Activated T-helper 1 cell treated with anti-CD3 and anti-CD28 coated beads, Interleukin-12 subunit alpha, Interleukin-12 subunit beta, Interleukin-2, Interleukin-4 antibody, amounts not matched to agents 30 ng/mL and 10 ng/mL and 1 ng/mL, durations not matched to agents 14 hours and 24 hours and 36 hours (primary cell): ENCODE measurements at regions of chr13 and their contacts with region 1.

Region 1: DNA sequence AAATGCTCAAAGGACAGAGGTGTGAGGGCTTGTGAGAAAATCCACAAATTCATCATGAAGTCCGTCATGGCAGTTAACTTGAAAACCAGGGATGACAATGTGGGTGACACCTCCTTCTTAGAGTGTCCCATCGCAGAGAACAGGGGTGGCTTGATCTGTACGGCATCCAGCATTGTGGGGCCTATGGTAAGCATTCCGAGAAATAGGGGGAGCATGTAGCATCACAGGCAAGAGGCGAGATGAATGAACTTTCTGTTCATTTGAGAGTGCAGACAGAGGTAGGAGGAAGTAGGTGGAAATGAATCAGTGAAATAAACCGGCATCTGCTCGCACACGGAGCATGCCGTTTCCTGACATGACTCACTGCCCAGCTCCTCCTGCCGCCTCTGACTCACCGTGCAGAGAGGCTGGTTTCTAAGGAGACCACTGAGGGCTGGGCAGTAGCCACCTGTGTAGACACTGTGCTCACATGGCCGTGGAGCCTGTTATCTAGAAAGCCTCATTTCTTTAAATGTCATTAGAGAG is 339.0 kb downstream of the RFC3 start:
- DNase-seq: peak; percentile 59
- H3K4me3 Mint-ChIP-seq: peak overlapping the region; percentile 68
- H3K27ac Mint-ChIP-seq: peak overlapping the region; percentile 91
- H3K4me1 Mint-ChIP-seq: peaks cover 37% of the 10 kb centered on the region
- H3K27me3 Mint-ChIP-seq: peaks cover 3% of the 10 kb centered on the region

Region 2: DNA sequence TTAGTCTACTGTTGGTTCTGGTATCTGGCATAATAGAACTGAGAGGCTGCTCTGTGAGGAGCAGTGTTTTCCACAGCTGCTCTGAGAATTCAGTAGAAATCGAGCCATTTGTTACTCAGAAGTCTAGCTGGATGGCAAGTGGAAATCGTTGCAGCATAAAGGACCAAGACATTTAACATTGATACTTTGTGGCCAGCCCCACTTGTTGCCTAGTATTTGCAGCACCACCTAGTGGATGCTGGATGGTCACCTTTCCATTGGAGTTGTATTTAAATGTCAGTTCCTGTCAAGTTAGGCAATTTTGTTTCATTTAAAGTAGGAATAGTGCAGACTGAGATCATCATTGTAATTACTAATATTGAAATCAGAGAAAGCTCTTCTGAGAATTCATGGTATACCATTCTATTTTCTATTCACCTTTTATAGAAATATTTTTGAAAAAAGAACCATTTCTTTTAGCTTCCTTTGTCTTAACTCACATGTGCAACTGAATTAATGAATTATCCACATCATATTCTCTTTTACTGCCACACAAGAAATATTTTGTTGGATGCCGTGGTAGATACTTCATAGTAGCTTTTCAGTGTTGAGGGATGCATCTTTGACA is 1506.1 kb before region 1 on chr13:
- intact Hi-C with region 1: loop called (anchors 5 kb)
- DNase-seq: peak; percentile 42
- H3K4me3 Mint-ChIP-seq: no peak overlapping the region
- H3K27ac Mint-ChIP-seq: no peak overlapping the region
- H3K4me1 Mint-ChIP-seq: peaks cover 52% of the 10 kb centered on the region
- H3K27me3 Mint-ChIP-seq: no peaks in the 10 kb centered on the region

Region 3: DNA sequence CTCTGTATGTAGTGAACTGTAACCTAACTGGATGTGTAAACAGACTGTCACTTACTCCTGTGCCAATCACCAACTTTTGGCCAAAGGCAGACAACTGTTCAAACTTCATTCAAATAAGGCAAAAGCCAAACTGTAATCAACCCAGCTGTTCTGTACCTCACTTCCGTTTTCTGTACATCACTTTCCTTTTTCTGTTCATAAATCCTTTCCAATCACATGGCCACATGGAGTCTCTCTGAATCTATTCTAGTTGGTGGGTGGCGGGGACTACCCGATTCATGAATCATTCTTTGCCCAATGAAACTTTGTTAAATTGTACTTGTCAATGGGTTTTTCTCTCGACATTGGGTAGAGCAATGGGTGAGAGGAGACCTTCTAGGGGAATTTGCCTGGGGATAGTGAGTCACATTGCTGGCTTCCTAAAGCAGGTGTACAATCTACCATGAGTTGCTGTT is 517.2 kb before region 1 on chr13:
- intact Hi-C with region 1: loop called (anchors 5 kb)
- DNase-seq: no peak
- H3K4me3 Mint-ChIP-seq: no peak overlapping the region
- H3K27ac Mint-ChIP-seq: peak overlapping the region; percentile 75
- H3K4me1 Mint-ChIP-seq: peaks cover 45% of the 10 kb centered on the region
- H3K27me3 Mint-ChIP-seq: peaks cover 2% of the 10 kb centered on the region

Region 4: DNA sequence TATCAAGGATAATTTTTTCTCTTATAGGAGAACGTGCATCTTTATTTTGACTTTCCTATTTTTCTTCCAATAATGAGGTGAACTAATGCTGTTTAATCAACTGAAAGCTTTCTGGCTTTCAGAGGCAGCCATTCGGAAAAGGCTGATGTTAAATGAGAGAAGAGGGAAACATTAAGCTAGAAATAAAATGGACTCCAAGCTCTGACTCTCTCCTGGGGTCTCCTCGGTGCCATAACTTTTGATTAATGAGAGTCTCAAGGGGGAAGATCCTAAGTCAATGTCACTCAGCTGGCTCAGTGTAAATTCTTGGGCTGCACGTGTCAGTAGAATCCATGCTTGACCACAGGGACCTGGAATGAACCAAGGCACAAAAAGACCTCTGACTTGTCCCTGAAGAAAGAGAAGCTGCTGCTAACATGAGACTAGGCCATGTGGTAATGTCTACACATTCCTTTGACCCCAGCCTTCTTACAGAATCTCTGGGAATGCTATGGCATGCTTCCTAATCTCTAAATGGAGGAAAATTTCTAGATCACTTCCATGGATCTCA is 491.2 kb before region 1 on chr13:
- intact Hi-C with region 1: no loop called
- DNase-seq: no peak
- H3K4me3 Mint-ChIP-seq: no peak overlapping the region
- H3K27ac Mint-ChIP-seq: no peak overlapping the region
- H3K4me1 Mint-ChIP-seq: peaks cover 13% of the 10 kb centered on the region
- H3K27me3 Mint-ChIP-seq: no peaks in the 10 kb centered on the region

Region 5: DNA sequence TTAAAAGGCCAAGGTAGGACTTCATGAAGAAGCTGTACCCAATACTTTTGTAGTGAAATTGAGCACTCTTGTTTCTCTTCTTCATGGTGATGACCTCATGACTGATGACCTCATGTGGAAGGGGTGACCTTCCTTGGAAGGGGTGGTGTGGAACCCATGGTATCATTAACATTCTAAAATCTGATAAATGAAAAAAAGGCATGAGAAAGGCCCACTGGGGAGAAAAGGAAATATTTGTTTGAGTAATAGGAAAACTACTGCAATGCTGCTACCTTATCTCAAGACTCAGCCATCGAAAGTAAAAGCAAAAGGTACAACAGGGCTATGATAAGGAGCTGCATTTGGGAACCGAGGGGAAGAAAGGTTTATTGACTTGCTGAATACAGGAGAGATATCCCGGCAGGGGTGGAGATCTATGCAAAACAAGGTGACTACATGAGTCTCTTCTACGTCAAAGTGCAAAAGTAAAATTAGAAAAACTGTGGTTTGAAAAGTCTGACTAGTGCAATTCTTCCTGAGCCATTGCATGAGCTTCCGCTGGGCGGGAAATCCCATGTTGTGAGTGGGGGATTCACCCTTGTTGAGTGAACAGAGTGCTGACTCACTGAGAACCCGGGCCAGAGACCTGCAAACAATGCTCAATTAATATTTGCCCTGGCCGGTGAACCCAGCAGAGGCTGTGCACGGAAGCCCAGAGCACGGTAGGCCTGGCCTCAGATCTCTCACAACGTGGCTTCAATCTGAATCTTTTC is 477.8 kb before region 1 on chr13:
- intact Hi-C with region 1: loop called (anchors 1 kb)
- DNase-seq: peak; percentile 71
- H3K4me3 Mint-ChIP-seq: peak overlapping the region; percentile 73
- H3K27ac Mint-ChIP-seq: peak overlapping the region; percentile 91
- H3K4me1 Mint-ChIP-seq: peaks cover 36% of the 10 kb centered on the region
- H3K27me3 Mint-ChIP-seq: peaks cover 2% of the 10 kb centered on the region

Region 6: GRCh38 chr13:33817901-33818706 is 338.8 kb before region 1 on chr13 and contains the start of gene RFC3:
- intact Hi-C with region 1: loop called (anchors 1 kb)
- DNase-seq: peak; percentile 90
- H3K4me3 Mint-ChIP-seq: peak within 1 kb of the TSS; percentile 97
- H3K27ac Mint-ChIP-seq: peak within 1 kb of the TSS; percentile 90
- H3K4me1 Mint-ChIP-seq: peaks cover 46% of the 10 kb centered on the region
- H3K27me3 Mint-ChIP-seq: peaks cover 8% of the 10 kb centered on the region
- total RNA-seq, gene RFC3: 74.7 and 78.0 TPM in 2 replicates

Region 7: GRCh38 chr13:34179481-34179880 is 22.6 kb after region 1 on chr13:
- intact Hi-C with region 1: no loop called
- DNase-seq: no peak
- H3K4me3 Mint-ChIP-seq: no peak overlapping the region
- H3K27ac Mint-ChIP-seq: no peak overlapping the region
- H3K4me1 Mint-ChIP-seq: no peaks in the 10 kb centered on the region
- H3K27me3 Mint-ChIP-seq: peaks cover 6% of the 10 kb centered on the region

Region 8: GRCh38 chr13:34257966-34258365 is 101.1 kb after region 1 on chr13:
- intact Hi-C with region 1: no loop called
- DNase-seq: no peak
- H3K4me3 Mint-ChIP-seq: no peak overlapping the region
- H3K27ac Mint-ChIP-seq: no peak overlapping the region
- H3K4me1 Mint-ChIP-seq: no peaks in the 10 kb centered on the region
- H3K27me3 Mint-ChIP-seq: no peaks in the 10 kb centered on the region

Region 9: GRCh38 chr13:34941835-34942731 is 785.2 kb after region 1 on chr13 and contains the start of gene NBEA:
- intact Hi-C with region 1: loop called (anchors 5 kb)
- DNase-seq: peak; percentile 63
- H3K4me3 Mint-ChIP-seq: peak within 1 kb of the TSS; percentile 90
- H3K27ac Mint-ChIP-seq: peak within 1 kb of the TSS; percentile 68
- H3K4me1 Mint-ChIP-seq: peaks cover 18% of the 10 kb centered on the region
- H3K27me3 Mint-ChIP-seq: peaks cover 49% of the 10 kb centered on the region
- total RNA-seq, gene NBEA: 0.15 and 0.18 TPM in 2 replicates

Region 10: GRCh38 chr13:35164324-35164932 is 1007.5 kb after region 1 on chr13:
- intact Hi-C with region 1: loop called (anchors 10 kb)
- DNase-seq: no peak
- H3K4me3 Mint-ChIP-seq: no peak overlapping the region
- H3K27ac Mint-ChIP-seq: no peak overlapping the region
- H3K4me1 Mint-ChIP-seq: peaks cover 10% of the 10 kb centered on the region
- H3K27me3 Mint-ChIP-seq: no peaks in the 10 kb centered on the region